RWPE1 (cell line): ENCODE measurements at regions of chr10 and their contacts with region 1.

Region 1: DNA sequence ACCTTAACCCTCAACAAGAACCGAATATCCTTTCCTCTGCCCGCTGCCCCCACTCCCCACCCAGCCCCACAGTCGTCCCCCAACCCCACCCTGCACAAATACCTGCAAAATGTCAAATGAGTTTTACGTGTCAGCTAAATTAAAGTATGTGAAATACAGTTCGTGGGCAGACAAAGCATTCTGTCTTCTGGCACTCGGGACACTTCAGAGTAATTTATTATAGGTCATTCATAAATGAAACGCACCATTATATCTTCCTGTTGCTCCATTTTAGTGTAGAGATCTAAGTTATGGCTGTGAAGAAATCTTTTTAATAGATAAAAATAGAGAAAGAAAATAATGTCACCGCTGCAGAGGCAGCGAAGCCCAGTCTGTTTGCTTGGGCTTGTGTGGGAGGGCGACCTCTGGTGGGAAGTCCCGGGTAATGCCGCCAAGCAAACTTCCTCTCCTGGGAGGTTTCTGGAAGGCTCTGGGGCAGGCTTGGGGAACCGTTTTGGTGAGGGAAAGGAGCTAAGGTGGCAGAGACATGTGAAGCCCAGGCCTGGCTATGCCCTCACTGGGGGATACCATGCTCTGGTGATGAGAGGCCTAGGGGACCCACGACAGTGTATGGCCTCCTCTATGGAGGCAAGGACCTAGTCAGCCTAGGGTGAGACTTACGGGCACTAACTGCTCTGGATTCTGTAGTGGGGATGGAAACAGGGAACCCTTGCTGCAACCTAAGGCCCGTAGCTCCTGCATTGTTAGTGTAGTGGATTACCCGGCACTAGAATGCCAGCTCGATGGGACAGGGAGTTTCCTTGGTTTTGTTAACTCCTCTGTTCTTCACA is 604.9 kb downstream of the LRMDA start:
- DNase-seq: peak; percentile 78
- H3K27ac ChIP-seq: no peak overlapping the region
- CTCF ChIP-seq: peak; percentile 91

Region 2: DNA sequence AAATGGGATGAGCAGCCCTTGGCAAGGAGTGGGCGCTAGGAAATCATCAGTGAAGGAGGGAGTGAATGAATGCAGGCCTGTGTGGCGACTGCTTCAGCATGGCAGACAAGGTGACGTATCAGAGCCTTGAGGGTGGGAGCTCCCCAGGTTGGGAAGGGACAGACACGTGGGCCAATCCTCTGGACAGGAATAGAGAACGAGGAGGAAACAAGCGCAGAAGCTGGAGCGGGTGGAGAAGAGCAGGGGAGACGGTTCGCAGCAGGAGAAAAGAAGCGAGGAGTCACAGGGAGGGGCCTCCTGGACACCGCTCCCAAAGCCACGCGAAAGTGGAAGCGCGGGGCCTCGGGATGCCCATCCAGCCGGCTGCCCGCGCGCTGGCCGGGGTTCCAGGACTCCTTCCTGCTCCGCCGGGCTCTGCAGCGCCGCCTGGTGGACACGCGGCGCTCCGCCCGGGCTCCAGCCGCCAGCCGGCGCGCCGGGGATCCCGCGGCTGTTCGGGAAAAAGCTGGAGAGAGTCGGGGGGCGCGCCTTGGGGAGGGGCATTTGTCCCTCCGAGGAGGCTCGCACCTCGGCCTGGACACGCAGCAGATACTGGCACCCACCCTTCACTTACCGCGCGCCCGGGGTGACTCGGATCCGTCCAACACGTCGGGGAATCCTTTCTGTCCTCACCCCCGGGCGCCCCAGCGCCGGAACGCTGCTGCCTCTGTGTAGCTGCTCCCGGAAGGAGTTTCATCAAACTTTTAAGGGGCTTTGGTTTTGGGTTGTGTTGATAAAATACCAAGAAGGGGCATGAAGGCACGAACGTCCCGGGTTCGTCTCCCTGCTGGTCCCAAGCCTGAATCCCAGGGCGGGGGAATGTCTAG is 641.0 kb before region 1 on chr10:
- CTCF ChIA-PET with region 1: interaction called, 12 read pairs
- POLR2A ChIA-PET with region 1: no interaction called
- DNase-seq: no peak
- H3K27ac ChIP-seq: peak overlapping the region; percentile 84
- CTCF ChIP-seq: peak; percentile 84

Region 3: DNA sequence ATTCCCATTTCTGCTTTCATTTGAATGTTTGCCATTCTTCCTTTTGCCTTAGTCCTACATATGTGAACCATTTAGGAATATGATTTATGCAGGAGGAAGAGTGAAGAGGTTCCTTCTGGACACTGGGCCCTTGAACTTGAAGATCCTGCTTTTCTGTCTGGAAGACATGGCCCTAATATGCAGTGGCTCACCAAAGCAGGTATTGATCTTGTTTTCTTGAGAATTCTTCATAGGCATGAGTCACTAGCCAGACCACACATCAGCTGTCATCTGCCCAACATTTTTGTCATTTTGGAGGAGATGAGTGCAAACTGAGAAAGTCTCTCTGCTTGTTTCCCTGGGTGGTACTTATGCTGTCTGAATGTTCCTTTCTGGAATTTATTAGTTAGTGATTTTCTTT is 222.3 kb before region 1 on chr10:
- CTCF ChIA-PET with region 1: no interaction called
- POLR2A ChIA-PET with region 1: no interaction called
- DNase-seq: no peak
- H3K27ac ChIP-seq: no peak overlapping the region
- CTCF ChIP-seq: no peak

Region 4: GRCh38 chr10:75926763-75927162 is 109.6 kb before region 1 on chr10:
- CTCF ChIA-PET with region 1: no interaction called
- POLR2A ChIA-PET with region 1: no interaction called
- DNase-seq: no peak
- H3K27ac ChIP-seq: no peak overlapping the region
- CTCF ChIP-seq: no peak

Region 5: GRCh38 chr10:76066457-76066856 is 30.1 kb after region 1 on chr10:
- CTCF ChIA-PET with region 1: no interaction called
- POLR2A ChIA-PET with region 1: no interaction called
- DNase-seq: no peak
- H3K27ac ChIP-seq: no peak overlapping the region
- CTCF ChIP-seq: no peak

Region 6: GRCh38 chr10:76139431-76139830 is 103.1 kb after region 1 on chr10:
- CTCF ChIA-PET with region 1: no interaction called
- POLR2A ChIA-PET with region 1: no interaction called
- DNase-seq: no peak
- H3K27ac ChIP-seq: no peak overlapping the region
- CTCF ChIP-seq: no peak